ENCODE measurements at regions of chr2 and their contacts with region 1.

Region 1: GRCh38 chr2:152175458-152176325 is at the start of gene STAM2:
- DNase-seq: peak; percentile 98
- H3K4me3 Mint-ChIP-seq: peak within 1 kb of the TSS; percentile 99
- H3K27ac Mint-ChIP-seq: peak within 1 kb of the TSS; percentile 99
- H3K4me1 Mint-ChIP-seq: peaks cover 30% of the 10 kb centered on the region
- H3K27me3 Mint-ChIP-seq: peaks cover 5% of the 10 kb centered on the region
- total RNA-seq, gene STAM2: 16.9 and 22.2 TPM in 2 replicates

Region 2: GRCh38 chr2:152036611-152037469 is 138.9 kb before region 1 on chr2:
- intact Hi-C with region 1: loop called (anchors 2 kb)
- DNase-seq: peak; percentile 85
- H3K4me3 Mint-ChIP-seq: no peak overlapping the region
- H3K27ac Mint-ChIP-seq: no peak overlapping the region
- H3K4me1 Mint-ChIP-seq: no peaks in the 10 kb centered on the region
- H3K27me3 Mint-ChIP-seq: peaks cover under 1% of the 10 kb centered on the region

Region 3: DNA sequence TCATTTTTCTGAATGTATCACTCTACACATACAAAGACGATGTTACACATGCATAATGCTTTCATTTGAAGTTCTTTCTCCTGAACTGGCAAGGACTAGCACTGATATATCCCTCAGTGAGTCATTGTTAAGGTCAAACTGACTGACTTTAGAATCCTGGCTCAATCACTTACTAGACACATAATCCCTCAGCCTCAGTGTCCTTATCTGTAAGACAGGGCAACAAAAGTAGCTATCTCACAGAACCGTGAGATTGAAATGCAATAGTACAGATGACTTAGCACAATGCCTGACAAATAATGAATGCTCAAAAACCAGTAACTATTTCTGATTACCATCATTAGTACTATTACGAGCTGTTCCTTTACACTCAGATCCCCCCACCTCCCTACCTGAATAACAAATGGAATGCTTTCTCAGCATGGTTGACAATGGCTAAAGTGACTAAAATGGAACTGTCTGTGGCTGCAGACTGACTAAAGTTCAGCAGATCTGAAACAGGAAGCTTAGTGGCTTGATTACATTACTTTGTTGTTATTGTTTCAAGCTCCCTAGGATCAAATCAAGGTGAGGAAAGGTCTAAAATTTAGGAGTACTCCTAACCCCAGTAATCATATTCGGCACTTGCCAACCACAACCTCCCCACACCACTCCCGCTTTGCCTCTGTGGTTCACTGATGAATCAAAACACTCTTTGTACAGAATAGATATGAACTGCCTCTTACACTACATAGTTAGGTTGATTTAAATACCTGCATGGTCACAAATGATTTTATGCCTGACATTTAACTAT is 41.0 kb before region 1 on chr2:
- intact Hi-C with region 1: loop called (anchors 5 kb)
- DNase-seq: peak; percentile 71
- H3K4me3 Mint-ChIP-seq: no peak overlapping the region
- H3K27ac Mint-ChIP-seq: peak overlapping the region; percentile 67
- H3K4me1 Mint-ChIP-seq: peaks cover 10% of the 10 kb centered on the region
- H3K27me3 Mint-ChIP-seq: no peaks in the 10 kb centered on the region

Region 4: GRCh38 chr2:152247344-152247710 is 71.6 kb after region 1 on chr2:
- intact Hi-C with region 1: no loop called
- DNase-seq: no peak
- H3K4me3 Mint-ChIP-seq: no peak overlapping the region
- H3K27ac Mint-ChIP-seq: no peak overlapping the region
- H3K4me1 Mint-ChIP-seq: no peaks in the 10 kb centered on the region
- H3K27me3 Mint-ChIP-seq: peaks cover 6% of the 10 kb centered on the region

Region 5: GRCh38 chr2:152407204-152407721 is 231.6 kb after region 1 on chr2:
- intact Hi-C with region 1: loop called (anchors 5 kb)
- DNase-seq: peak; percentile 81
- H3K4me3 Mint-ChIP-seq: peak overlapping the region; percentile 78
- H3K27ac Mint-ChIP-seq: peak overlapping the region; percentile 91
- H3K4me1 Mint-ChIP-seq: peaks cover 54% of the 10 kb centered on the region
- H3K27me3 Mint-ChIP-seq: no peaks in the 10 kb centered on the region

Region 6: DNA sequence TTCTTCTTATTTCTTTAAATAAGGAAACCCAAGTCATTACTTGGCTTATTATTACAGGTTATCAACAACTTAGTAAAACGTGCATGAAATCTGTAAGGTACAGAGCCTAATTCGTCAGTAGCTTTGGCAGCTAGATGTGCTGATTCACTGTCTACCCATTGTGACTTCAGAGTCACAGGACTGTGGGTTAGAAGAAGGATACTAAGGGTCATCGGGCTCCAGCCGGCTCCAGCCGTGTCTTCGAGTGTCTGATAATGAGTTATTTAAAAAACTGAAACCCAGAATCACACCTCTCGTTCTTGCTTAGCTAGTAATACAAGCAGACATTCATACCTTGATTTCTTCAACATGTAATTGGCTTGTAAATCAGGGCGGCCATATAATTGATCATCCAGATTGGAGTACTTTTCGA is 329.8 kb after region 1 on chr2:
- intact Hi-C with region 1: loop called (anchors 5 kb)
- DNase-seq: no peak
- H3K4me3 Mint-ChIP-seq: no peak overlapping the region
- H3K27ac Mint-ChIP-seq: no peak overlapping the region
- H3K4me1 Mint-ChIP-seq: peaks cover 9% of the 10 kb centered on the region
- H3K27me3 Mint-ChIP-seq: no peaks in the 10 kb centered on the region

Region 7: GRCh38 chr2:152635635-152636298 is 460.1 kb after region 1 on chr2:
- intact Hi-C with region 1: loop called (anchors 1 kb)
- DNase-seq: peak; percentile 91
- H3K4me3 Mint-ChIP-seq: no peak overlapping the region
- H3K27ac Mint-ChIP-seq: no peak overlapping the region
- H3K4me1 Mint-ChIP-seq: no peaks in the 10 kb centered on the region
- H3K27me3 Mint-ChIP-seq: no peaks in the 10 kb centered on the region

Region 8: GRCh38 chr2:152740743-152741328 is 565.1 kb after region 1 on chr2:
- intact Hi-C with region 1: loop called (anchors 2 kb)
- DNase-seq: no peak
- H3K4me3 Mint-ChIP-seq: no peak overlapping the region
- H3K27ac Mint-ChIP-seq: no peak overlapping the region
- H3K4me1 Mint-ChIP-seq: no peaks in the 10 kb centered on the region
- H3K27me3 Mint-ChIP-seq: no peaks in the 10 kb centered on the region

Measured in activated CD4-positive, alpha-beta T cell treated with anti-CD3 and anti-CD28 coated beads, Interleukin-2, amount 10 ng/mL, durations not matched to agents 24 days and 14 days (primary cell).